ENCODE measurements at regions of chr10 and their contacts with region 1.

Region 1: DNA sequence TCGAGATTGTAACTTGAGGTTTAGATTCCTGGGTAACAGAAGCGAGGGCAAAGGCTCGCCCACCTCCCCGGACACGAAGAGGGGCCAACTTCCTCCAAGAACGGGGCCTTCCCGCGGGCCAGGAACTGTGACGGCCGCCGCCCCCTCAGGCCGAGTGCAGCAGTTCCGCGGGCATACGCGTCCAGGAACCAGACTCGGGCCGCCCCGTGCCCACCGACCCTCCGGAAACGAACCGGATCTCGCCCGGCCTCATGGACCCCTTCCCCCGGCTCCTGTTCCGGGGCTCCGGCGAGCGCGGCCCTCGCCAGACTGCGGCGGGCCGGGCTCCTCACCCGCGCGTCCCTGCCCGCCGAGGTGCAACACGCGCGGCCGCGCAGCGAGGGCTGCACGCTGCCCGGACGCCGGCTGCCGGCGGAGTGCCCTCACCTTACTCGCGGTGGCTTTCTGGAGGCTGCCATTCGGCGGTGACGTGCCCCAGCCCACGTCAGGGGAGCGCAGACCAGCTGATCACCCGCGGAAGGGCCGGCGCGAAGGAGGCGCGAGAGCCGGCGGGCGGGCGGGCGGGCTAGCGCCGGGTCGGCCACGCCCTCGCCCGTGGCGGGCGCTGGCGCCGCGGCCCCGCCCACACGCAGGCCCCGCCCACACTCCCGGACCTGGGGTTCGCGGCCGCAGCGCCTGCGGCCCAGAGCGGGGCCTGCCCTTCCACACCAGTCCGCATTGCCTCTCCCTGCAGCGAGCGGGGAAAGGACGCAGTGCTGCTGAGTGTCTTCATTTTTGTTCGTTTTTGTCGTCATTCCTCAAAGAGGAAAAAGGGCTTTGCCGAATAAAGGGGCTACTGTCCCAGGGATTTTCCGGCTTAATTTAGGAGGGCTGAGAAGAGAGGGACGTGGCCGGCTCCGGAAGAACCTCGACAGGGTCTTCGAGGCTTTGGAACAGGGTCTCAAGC is at the start of gene XPNPEP1:
- DNase-seq: peak; percentile 79 to 94 (median 88)
- H3K4me3 ChIP-seq: peak within 1 kb of the TSS; percentile 58 to 100 (median 92)
- H3K27ac ChIP-seq: peak within 1 kb of the TSS; percentile 49 to 96 (median 92)
- H3K27me3 ChIP-seq: no peaks in the 10 kb centered on the region
- CTCF ChIP-seq: peak in 5 of 56 donors; percentile 8 to 29 (median 20)
- total RNA-seq, gene XPNPEP1: 42.7 to 96.7 (median 63.5) TPM

Region 2: GRCh38 chr10:109966961-109967738 is 43.9 kb after region 1 on chr10:
- intact Hi-C with region 1: no loop called
- DNase-seq: peak in 1 of 10 donors; percentile 35
- H3K4me3 ChIP-seq: peak overlapping the region in 5 of 59 donors; percentile 1 to 12 (median 5)
- H3K27ac ChIP-seq: peak overlapping the region in 28 of 59 donors; percentile 0 to 83 (median 34)
- H3K27me3 ChIP-seq: no peaks in the 10 kb centered on the region
- CTCF ChIP-seq: no peak

Region 3: DNA sequence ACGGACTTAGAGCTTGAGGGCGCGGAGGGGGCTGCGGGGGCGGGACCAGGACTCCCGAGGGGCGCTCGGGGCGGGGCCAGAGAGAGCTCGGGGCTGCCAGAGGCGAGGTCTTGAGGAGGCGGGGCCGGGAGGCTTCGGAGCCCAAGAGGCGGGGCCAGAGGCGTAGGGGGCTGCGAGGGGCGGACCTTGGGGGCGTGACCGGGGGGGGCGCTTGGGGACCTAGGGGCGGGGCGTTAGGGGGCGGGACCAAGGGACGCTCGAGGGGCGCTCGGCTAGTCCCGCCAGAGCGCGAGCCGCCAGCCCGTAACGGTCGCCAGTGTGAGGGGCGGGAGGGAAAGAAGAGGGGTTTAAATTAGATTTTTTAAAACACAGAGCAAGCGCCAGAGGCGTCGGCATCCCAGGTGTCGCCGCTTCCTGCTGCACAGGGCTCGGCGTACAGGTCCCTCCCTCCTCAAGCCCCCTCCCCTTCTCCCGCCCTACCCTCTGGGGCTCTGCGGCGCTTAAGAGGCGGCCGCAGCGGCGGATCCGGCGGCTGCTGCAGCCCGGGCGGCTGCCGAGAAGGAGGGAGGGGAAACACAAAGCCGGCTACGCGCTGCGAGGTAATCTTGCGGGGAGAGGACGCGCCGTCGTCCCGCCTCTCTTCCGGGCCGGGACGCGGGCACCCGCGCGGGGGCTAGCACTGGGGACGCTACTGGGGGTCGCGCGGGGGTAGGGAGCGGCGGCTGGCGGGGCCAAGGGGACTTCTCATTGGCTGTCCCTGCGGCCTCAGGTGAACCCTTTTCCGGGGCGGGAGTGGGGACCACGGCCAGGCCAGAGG is 84.7 kb after region 1 on chr10 and contains the start of gene ADD3:
- intact Hi-C with region 1: loop called (anchors 2 kb)
- DNase-seq: peak; percentile 90 to 98 (median 94)
- H3K4me3 ChIP-seq: peak within 1 kb of the TSS; percentile 73 to 99 (median 94)
- H3K27ac ChIP-seq: peak within 1 kb of the TSS; percentile 84 to 99 (median 97)
- H3K27me3 ChIP-seq: no peaks in the 10 kb centered on the region
- CTCF ChIP-seq: peak in 8 of 56 donors; percentile 3 to 23 (median 12)
- total RNA-seq, gene ADD3: 171 to 457 (median 267) TPM